Activated naive CD8-positive, alpha-beta T cell treated with anti-CD3 and anti-CD28 coated beads, Interleukin-2, amount 10 ng/mL, durations not matched to agents 7 days and 5 days (primary cell): ENCODE measurements at regions of chr4 and their contacts with region 1.

Region 1: DNA sequence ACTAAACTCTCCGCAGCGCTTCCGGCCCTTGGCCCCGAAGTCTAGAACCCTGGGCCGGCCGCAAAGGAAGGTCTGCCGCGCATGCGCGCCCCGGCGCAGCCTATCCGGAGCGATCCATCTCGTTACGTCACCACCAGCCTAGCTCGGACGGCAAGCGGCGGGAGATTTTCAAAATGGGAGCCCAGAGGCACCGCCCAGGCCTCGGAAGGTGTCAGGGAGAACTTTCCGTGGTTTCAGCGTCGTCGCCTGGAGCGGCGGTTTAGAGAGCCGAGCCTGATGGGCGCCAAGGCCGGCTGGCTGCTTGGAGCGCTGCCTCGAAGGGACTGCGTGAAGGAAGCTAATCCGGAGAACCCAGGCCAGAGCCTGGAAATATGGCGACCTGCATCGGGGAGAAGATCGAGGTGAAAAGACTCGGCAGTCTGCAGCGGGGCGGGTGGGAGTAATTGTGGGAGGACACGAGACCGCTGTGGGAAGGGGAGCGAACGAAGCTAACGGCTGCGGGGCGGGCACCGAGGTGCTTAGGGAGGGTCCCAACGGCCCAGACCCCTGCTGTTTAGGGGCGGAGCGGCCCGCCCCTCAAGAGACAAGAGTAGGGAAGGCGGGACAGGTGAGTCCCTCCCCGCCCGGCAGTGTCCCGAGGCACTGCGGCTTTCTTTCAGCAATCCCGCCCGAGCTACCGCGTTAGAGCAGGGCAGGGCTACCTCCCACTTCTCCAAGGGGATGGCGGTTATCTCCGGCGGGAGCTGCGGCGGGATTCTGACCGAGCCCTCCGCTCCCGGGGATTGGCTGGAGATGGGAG is at the start of gene PLK4:
- DNase-seq: peak; percentile 95
- ATAC-seq: peak; percentile 97
- H3K4me3 Mint-ChIP-seq: peak within 1 kb of the TSS; percentile 92
- H3K27ac Mint-ChIP-seq: peak within 1 kb of the TSS; percentile 97
- H3K4me1 Mint-ChIP-seq: peaks cover 28% of the 10 kb centered on the region
- H3K27me3 Mint-ChIP-seq: no peaks in the 10 kb centered on the region
- total RNA-seq, gene PLK4: 35.5 to 39.4 TPM

Region 2: DNA sequence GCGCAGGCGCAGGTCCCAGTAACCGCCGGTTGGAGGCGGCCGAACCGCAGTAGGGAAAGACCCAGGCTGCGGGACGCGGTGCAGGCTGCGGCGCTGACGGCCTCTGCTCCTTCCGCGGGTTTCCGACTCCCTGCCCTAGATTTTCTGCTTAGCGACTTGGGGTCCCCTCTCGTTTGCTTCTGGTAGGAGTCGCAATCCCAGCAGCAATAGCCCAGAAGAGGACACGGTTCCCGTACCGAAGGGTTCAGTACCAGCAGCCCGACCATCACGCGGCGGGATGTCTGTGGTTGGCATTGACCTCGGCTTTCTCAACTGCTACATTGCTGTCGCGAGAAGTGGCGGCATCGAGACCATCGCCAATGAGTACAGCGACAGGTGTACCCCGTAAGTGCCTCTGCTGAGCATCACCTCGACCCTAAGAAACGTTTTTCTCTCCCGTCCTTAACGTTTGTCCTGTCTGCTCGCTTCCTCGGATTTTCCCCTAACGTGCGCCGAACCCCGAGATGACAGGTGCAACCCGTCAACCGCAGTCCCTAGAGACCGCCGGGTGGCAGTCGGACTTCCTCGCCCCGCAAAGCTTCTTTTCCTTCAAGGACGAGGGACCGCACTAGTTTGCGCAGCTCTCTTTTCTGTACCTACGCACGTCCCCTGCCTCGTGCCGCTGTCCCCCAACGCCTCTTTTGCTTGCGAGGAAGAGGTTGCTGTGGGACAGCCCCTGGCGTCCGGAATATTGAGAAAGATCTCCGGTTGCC is 98.5 kb before region 1 on chr4 and contains the start of gene HSPA4L:
- POLR2A ChIA-PET with region 1: interaction called, 10 read pairs
- DNase-seq: peak; percentile 75
- ATAC-seq: peak; percentile 83
- H3K4me3 Mint-ChIP-seq: peak within 1 kb of the TSS; percentile 96
- H3K27ac Mint-ChIP-seq: peak within 1 kb of the TSS; percentile 82
- H3K4me1 Mint-ChIP-seq: peaks cover 16% of the 10 kb centered on the region
- H3K27me3 Mint-ChIP-seq: peaks cover 73% of the 10 kb centered on the region
- total RNA-seq, gene HSPA4L: 0.06 to 0.28 TPM

Region 3: GRCh38 chr4:128060699-128061565 is 180.0 kb after region 1 on chr4 and contains the start of gene LARP1B:
- POLR2A ChIA-PET with region 1: interaction called, 16 read pairs
- DNase-seq: peak; percentile 94
- ATAC-seq: peak; percentile 92
- H3K4me3 Mint-ChIP-seq: peak within 1 kb of the TSS; percentile 85
- H3K27ac Mint-ChIP-seq: peak within 1 kb of the TSS; percentile 87
- H3K4me1 Mint-ChIP-seq: peaks cover 9% of the 10 kb centered on the region
- H3K27me3 Mint-ChIP-seq: peaks cover 3% of the 10 kb centered on the region
- total RNA-seq, gene LARP1B: 12.8 to 13.2 TPM

Region 4: GRCh38 chr4:128227991-128228571 is 347.1 kb after region 1 on chr4:
- POLR2A ChIA-PET with region 1: no interaction called
- DNase-seq: no peak
- ATAC-seq: no peak
- H3K4me3 Mint-ChIP-seq: no peak overlapping the region
- H3K27ac Mint-ChIP-seq: no peak overlapping the region
- H3K4me1 Mint-ChIP-seq: no peaks in the 10 kb centered on the region
- H3K27me3 Mint-ChIP-seq: peaks cover 8% of the 10 kb centered on the region